ENCODE measurements at regions of chr13 and their contacts with region 1.

Region 1: DNA sequence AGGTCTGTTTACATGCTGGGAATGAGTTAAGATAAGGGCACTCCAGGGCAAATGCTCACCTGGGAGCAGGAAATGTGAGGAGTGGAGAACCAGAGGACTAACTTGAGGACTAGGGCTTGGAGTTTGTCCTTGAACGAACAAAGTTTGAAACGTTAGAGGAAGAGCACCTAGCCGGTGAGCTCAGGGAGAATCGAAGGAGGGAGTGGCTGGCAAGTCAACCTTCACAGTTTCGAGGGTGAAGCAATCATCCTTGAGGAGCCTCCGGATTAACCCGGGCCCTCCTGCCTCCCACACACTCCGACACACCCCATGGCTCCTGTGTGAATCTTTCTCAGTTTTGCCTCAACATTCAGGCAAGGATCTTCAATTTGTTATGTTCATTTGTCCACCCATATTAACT is 58.6 kb downstream of the LMO7 start:
- DNase-seq: no peak
- H3K4me3 ChIP-seq: no peak overlapping the region
- H3K4me3 Mint-ChIP-seq: no peak overlapping the region
- H3K27ac ChIP-seq: no peak overlapping the region
- H3K27ac Mint-ChIP-seq: no peak overlapping the region
- H3K4me1 ChIP-seq: no peaks in the 10 kb centered on the region
- H3K4me1 Mint-ChIP-seq: no peaks in the 10 kb centered on the region
- H3K27me3 ChIP-seq: no peaks in the 10 kb centered on the region
- H3K27me3 Mint-ChIP-seq: no peaks in the 10 kb centered on the region

Region 2: DNA sequence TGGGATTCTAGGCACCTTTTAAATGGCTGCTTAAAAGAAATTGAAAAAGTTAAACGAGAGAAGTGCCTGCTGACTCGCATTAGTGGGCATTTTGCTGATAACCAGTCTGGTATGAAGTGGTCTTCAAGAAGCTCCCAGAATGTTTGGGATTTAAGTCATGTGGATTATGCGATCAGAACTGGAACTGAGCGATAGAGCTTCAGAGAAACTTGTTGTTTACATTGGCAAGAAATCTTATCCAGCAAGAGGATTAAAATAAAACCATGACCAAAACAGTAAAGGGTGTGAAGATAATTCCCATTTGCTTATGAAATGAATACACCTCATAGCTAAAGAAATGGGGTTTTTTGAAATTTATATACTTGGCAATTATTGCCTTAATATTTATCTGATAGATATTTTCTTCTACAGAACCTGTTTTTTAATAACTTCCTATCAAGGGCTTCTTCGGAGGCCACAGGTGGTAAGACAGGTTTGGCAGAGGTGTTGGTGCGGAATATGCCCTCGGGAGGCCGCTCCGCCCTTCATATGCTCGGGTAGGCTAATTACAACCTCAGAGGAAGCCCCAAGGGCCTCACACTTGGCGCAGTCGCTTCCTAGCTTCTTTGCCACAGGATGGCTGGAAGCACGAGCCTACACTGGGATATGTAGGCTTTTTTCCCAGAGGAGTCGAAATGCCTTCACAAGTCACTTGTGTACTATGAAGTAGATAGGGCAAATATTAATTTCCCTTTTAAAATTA is 10.0 kb after region 1 on chr13:
- CTCF ChIA-PET with region 1: interaction called, 30 read pairs
- POLR2A ChIA-PET with region 1: no interaction called
- DNase-seq: no peak
- H3K4me3 ChIP-seq: no peak overlapping the region
- H3K4me3 Mint-ChIP-seq: no peak overlapping the region
- H3K27ac ChIP-seq: no peak overlapping the region
- H3K27ac Mint-ChIP-seq: peak overlapping the region in 2 of 8 donors; percentile 50 to 80
- H3K4me1 ChIP-seq: no peaks in the 10 kb centered on the region
- H3K4me1 Mint-ChIP-seq: peaks cover 7 to 16% (median 8%) of the 10 kb centered on the region in 3 donors
- H3K27me3 ChIP-seq: no peaks in the 10 kb centered on the region
- H3K27me3 Mint-ChIP-seq: no peaks in the 10 kb centered on the region

Region 3: DNA sequence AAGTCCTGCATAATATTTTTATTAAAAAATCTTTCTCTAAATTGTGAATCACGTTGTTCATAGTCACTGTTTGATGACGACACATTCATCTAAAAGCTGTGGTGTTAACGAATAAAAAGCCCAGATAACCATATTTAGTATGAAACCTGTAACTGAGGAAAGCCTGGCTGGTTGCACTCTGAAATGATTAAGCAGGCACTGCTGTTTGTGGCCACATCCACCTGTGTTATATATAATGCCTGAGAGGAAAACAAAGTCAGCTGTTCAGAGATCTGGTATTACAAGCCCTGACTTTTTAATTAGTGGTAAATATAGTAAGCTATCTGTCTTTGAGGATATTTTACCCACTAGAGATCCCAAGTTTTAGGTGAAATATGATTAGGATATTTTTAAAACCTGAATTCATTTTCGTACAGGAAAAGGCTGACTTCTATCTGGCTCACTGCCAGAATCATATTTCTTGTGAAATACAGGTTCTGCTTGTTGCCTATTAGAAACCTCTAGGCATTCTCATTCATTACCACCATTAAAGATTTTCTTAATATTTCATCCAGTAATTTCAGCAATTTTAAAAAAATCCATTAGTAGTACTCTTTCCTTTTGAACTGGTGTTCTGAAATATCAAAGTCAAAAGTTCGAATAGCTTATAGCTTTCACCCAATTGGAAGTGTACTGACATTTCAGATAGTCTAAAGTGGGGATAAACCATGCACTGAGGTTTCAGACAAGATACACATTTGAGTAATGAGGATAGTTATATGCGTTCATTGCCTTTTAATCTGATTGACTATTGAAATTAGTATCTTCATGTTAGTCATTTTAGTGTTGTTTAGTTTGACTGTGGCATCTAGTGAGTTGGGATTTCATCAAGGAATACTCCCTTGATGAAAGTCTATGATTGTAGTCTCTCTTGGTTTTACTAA is 21.1 kb after region 1 on chr13:
- CTCF ChIA-PET with region 1: interaction called, 15 read pairs
- POLR2A ChIA-PET with region 1: no interaction called
- DNase-seq: no peak
- H3K4me3 ChIP-seq: no peak overlapping the region
- H3K4me3 Mint-ChIP-seq: no peak overlapping the region
- H3K27ac ChIP-seq: no peak overlapping the region
- H3K27ac Mint-ChIP-seq: no peak overlapping the region
- H3K4me1 ChIP-seq: no peaks in the 10 kb centered on the region
- H3K4me1 Mint-ChIP-seq: peaks cover 0 to 7% (median 0%) of the 10 kb centered on the region in 3 donors
- H3K27me3 ChIP-seq: no peaks in the 10 kb centered on the region
- H3K27me3 Mint-ChIP-seq: no peaks in the 10 kb centered on the region

Region 4: GRCh38 chr13:75870397-75870903 is 175.7 kb after region 1 on chr13:
- CTCF ChIA-PET with region 1: interaction called, 29 read pairs
- POLR2A ChIA-PET with region 1: no interaction called
- DNase-seq: peak in 3 of 5 donors; percentile 25 to 44 (median 31)
- H3K4me3 ChIP-seq: peak overlapping the region; percentile 45
- H3K4me3 Mint-ChIP-seq: peak overlapping the region; percentile 61 to 81 (median 75)
- H3K27ac ChIP-seq: no peak overlapping the region
- H3K27ac Mint-ChIP-seq: peak overlapping the region in 7 of 8 donors; percentile 24 to 87 (median 72)
- H3K4me1 ChIP-seq: peaks cover 18% of the 10 kb centered on the region
- H3K4me1 Mint-ChIP-seq: peaks cover 8 to 23% (median 17%) of the 10 kb centered on the region in 3 donors
- H3K27me3 ChIP-seq: no peaks in the 10 kb centered on the region
- H3K27me3 Mint-ChIP-seq: peaks cover 9 to 16% of the 10 kb centered on the region in 2 donors

Region 5: GRCh38 chr13:76473552-76474134 is 778.9 kb after region 1 on chr13:
- CTCF ChIA-PET with region 1: interaction called, 18 read pairs
- POLR2A ChIA-PET with region 1: no interaction called
- DNase-seq: peak; percentile 38 to 67 (median 47)
- H3K4me3 ChIP-seq: no peak overlapping the region
- H3K4me3 Mint-ChIP-seq: peak overlapping the region in 1 of 7 donors; percentile 18
- H3K27ac ChIP-seq: no peak overlapping the region
- H3K27ac Mint-ChIP-seq: no peak overlapping the region
- H3K4me1 ChIP-seq: no peaks in the 10 kb centered on the region
- H3K4me1 Mint-ChIP-seq: no peaks in the 10 kb centered on the region
- H3K27me3 ChIP-seq: no peaks in the 10 kb centered on the region
- H3K27me3 Mint-ChIP-seq: peaks cover 2 to 8% of the 10 kb centered on the region in 2 donors

Region 6: GRCh38 chr13:76903544-76904162 is 1208.9 kb after region 1 on chr13:
- CTCF ChIA-PET with region 1: interaction called, 12 read pairs
- POLR2A ChIA-PET with region 1: no interaction called
- DNase-seq: peak; percentile 38 to 76 (median 48)
- H3K4me3 ChIP-seq: no peak overlapping the region
- H3K4me3 Mint-ChIP-seq: no peak overlapping the region
- H3K27ac ChIP-seq: no peak overlapping the region
- H3K27ac Mint-ChIP-seq: no peak overlapping the region
- H3K4me1 ChIP-seq: no peaks in the 10 kb centered on the region
- H3K4me1 Mint-ChIP-seq: no peaks in the 10 kb centered on the region
- H3K27me3 ChIP-seq: no peaks in the 10 kb centered on the region
- H3K27me3 Mint-ChIP-seq: peaks cover 5 to 45% of the 10 kb centered on the region in 2 donors

Measured in CD8-positive, alpha-beta memory T cell (primary cell).